Activated B cell treated with CpG ODN at 0.5 μM for 24 hours (primary cell): ENCODE measurements at regions of chr5 and their contacts with region 1.

Region 1: GRCh38 chr5:40834849-40835787 is at the start of gene RPL37:
- DNase-seq: peak; percentile 80
- ATAC-seq: peak; percentile 98
- H3K4me3 Mint-ChIP-seq: peak within 1 kb of the TSS; percentile 100
- H3K27ac Mint-ChIP-seq: peak within 1 kb of the TSS; percentile 99
- H3K4me1 Mint-ChIP-seq: peaks cover 49% of the 10 kb centered on the region
- H3K27me3 Mint-ChIP-seq: no peaks in the 10 kb centered on the region
- CTCF ChIP-seq: no peak
- total RNA-seq, gene RPL37: 2,223 and 2,547 TPM in 2 replicates

Region 2: DNA sequence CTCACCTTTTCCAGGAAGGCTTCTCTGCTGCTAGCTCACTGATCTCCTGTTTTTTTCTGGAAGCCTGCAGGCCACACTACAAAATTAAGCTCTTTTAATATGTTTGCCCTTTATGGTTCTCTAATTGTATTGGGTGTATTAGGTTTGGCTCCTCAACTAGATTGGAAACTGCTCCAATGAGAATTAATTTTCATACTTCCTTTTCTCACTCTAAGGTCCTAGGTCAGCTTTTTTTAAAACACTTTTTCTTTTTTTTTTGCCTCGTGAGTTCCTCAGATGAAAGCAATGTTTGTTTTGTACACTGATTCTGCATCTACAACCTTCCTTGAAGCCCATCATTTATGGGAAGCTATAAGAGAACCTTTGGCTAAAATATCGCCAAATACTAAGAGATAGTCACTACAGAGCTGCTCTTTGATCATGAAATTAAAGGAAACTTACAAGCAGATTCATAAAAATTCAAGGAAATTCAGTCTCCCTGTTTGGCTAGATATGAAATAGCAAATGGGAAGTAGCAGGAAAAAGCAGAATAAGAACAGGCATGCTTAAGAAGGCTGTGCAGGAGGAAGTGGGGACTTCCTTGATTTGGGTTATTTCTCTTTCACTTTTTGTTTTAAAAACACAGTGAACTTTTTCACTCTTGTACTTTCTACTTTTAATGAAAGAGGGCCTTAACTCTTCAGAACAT is 1560.6 kb before region 1 on chr5:
- CTCF ChIA-PET with region 1: no interaction called
- POLR2A ChIA-PET with region 1: no interaction called
- intact Hi-C with region 1: loop called (anchors 1 kb)
- DNase-seq: no peak
- ATAC-seq: peak; percentile 80
- H3K4me3 Mint-ChIP-seq: peak overlapping the region; percentile 81
- H3K27ac Mint-ChIP-seq: peak overlapping the region; percentile 94
- H3K4me1 Mint-ChIP-seq: peaks cover 32% of the 10 kb centered on the region
- H3K27me3 Mint-ChIP-seq: no peaks in the 10 kb centered on the region
- CTCF ChIP-seq: no peak

Region 3: GRCh38 chr5:39720136-39720535 is 1115.0 kb before region 1 on chr5:
- CTCF ChIA-PET with region 1: no interaction called
- POLR2A ChIA-PET with region 1: no interaction called
- intact Hi-C with region 1: no loop called
- DNase-seq: no peak
- ATAC-seq: no peak
- H3K4me3 Mint-ChIP-seq: no peak overlapping the region
- H3K27ac Mint-ChIP-seq: no peak overlapping the region
- H3K4me1 Mint-ChIP-seq: no peaks in the 10 kb centered on the region
- H3K27me3 Mint-ChIP-seq: no peaks in the 10 kb centered on the region
- CTCF ChIP-seq: no peak

Region 4: GRCh38 chr5:40798012-40798855 is 36.9 kb before region 1 on chr5 and contains the start of gene PRKAA1:
- CTCF ChIA-PET with region 1: interaction called, 4 read pairs
- POLR2A ChIA-PET with region 1: interaction called, 6 read pairs
- intact Hi-C with region 1: loop called (anchors 1 kb)
- DNase-seq: peak; percentile 93
- ATAC-seq: peak; percentile 96
- H3K4me3 Mint-ChIP-seq: peak within 1 kb of the TSS; percentile 91
- H3K27ac Mint-ChIP-seq: peak within 1 kb of the TSS; percentile 93
- H3K4me1 Mint-ChIP-seq: peaks cover 41% of the 10 kb centered on the region
- H3K27me3 Mint-ChIP-seq: no peaks in the 10 kb centered on the region
- CTCF ChIP-seq: no peak
- total RNA-seq, gene PRKAA1: 61.9 and 69.4 TPM in 2 replicates

Region 5: DNA sequence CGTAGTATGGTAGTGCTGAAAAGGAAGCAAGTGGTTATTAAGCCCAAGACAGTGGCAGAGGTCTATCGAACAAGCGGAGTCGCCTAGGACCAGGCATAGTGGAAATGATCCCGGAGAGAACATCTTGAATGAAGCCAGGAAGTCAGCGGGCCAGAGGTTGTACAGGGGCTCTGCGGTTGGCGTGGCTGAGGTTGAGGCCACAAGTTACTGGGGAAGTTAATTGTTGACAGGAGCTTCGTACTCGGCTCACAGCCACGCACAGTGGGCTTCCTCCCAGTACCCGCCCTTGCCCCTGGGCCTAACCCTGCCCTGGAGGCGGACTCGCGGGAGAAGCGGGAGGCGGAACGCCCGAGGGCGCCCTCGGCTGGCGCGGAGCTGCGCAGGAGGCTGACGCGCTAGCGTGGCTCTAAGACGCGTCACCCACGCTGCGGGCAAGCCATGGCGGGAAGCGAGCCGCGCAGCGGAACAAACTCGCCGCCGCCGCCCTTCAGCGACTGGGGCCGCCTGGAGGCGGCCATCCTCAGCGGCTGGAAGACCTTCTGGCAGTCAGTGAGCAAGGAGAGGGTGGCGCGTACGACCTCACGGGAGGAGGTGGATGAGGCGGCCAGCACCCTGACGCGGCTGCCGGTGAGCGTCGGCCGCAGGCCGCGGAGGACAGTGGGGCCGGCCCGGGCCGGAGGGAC is 1089.9 kb after region 1 on chr5 and contains the start of gene FBXO4:
- CTCF ChIA-PET with region 1: no interaction called
- POLR2A ChIA-PET with region 1: no interaction called
- intact Hi-C with region 1: loop called (anchors 1 kb)
- DNase-seq: peak; percentile 82
- ATAC-seq: peak; percentile 95
- H3K4me3 Mint-ChIP-seq: peak within 1 kb of the TSS; percentile 93
- H3K27ac Mint-ChIP-seq: peak within 1 kb of the TSS; percentile 97
- H3K4me1 Mint-ChIP-seq: peaks cover 24% of the 10 kb centered on the region
- H3K27me3 Mint-ChIP-seq: no peaks in the 10 kb centered on the region
- CTCF ChIP-seq: no peak
- total RNA-seq, gene FBXO4: 14.8 and 15.9 TPM in 2 replicates